ENCODE measurements at regions of chr18 and their contacts with region 1.

Region 1: DNA sequence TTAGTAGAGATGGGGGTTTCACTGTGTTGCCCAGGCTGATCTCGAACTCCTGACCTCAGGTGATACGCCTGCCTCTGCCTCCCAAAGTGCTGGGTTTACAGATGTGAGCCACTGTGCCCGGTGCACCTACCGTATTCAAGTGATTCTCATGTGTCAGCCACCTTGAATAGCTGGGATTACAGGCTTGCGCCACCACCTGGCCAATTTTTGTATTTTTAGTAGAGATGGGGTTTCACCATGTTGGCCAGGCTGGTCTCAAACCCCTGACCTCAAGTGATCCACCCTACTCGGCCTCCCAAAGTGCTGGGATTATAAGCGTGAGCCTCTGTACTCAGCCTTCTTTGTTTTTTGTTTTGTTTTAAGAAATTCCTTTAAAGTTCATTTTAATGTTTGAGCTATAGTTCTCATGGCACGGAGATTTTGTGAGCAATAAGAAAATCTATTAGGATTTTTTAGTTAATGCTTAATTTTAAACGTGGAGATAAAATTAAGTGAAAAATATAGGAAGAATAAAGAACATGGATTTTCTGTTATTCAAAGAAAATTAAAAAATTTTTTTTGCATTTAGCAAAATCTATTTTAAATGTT is 242.6 kb downstream of the PHLPP1 start:
- H3K4me3 ChIP-seq: no peak overlapping the region
- H3K27ac ChIP-seq: no peak overlapping the region
- H3K4me1 ChIP-seq: no peaks in the 10 kb centered on the region
- CTCF ChIP-seq: peak; percentile 49; the same call in 1 of the 2 replicates

Region 2: GRCh38 chr18:62714671-62715435 is 243.1 kb before region 1 on chr18:
- CTCF ChIA-PET with region 1: interaction called, 26 read pairs
- POLR2A ChIA-PET with region 1: interaction called, 4 read pairs
- H3K4me3 ChIP-seq: peak overlapping the region; percentile 83
- H3K27ac ChIP-seq: peak overlapping the region; percentile 99
- H3K4me1 ChIP-seq: peaks cover 20% of the 10 kb centered on the region
- CTCF ChIP-seq: peak; percentile 97

Region 3: DNA sequence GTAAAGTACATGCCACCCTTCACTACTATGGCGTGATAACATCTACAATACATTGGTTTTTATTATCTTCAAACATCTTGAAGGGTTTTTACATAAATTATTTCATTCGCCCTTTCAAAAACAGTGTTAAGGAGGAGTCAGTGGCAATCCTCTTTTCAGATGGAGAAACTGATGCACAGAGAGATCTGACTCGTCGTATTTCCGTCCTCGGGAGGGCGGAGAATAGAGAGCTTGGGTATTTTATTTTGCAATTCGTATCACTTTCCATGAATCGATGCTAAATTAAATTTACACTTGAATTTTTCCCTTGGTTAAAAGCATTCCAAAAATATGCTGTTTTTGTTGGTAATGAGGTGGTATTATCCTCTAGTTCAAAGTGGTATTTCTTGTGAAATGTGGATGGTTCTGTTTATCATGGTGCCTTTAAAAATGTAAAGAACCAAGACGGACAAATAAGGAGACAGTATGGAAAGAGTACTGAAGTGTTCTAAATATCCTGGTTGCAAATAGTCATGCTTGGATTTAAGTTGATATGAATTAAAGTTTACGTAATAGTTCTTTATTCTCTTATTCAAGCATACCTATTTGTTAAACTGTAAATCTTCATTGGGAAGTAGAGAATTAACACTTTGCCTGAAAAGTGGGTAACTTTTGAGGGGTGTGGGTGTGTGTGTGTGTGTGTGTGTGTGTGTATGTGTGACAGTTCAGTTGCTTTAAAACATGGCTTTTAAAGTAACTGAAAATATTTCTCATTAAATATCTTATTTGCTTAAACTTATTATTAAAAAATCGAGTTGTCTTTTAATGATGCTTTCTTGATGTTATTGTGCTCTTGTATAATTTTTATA is 237.0 kb before region 1 on chr18:
- CTCF ChIA-PET with region 1: interaction called, 26 read pairs
- POLR2A ChIA-PET with region 1: no interaction called
- H3K4me3 ChIP-seq: no peak overlapping the region
- H3K27ac ChIP-seq: no peak overlapping the region
- H3K4me1 ChIP-seq: peaks cover 52% of the 10 kb centered on the region
- CTCF ChIP-seq: no peak

Region 4: GRCh38 chr18:62944454-62944853 is 13.5 kb before region 1 on chr18:
- CTCF ChIA-PET with region 1: interaction called, 16 read pairs
- POLR2A ChIA-PET with region 1: no interaction called
- H3K4me3 ChIP-seq: no peak overlapping the region
- H3K27ac ChIP-seq: no peak overlapping the region
- H3K4me1 ChIP-seq: no peaks in the 10 kb centered on the region
- CTCF ChIP-seq: no peak

Region 5: GRCh38 chr18:63969960-63970802 is 1012.2 kb after region 1 on chr18 and contains the start of gene SERPINB8:
- CTCF ChIA-PET with region 1: no interaction called
- POLR2A ChIA-PET with region 1: no interaction called
- H3K4me3 ChIP-seq: peak within 1 kb of the TSS; percentile 76
- H3K27ac ChIP-seq: peak within 1 kb of the TSS; percentile 94
- H3K4me1 ChIP-seq: peaks cover 9% of the 10 kb centered on the region; the same call in 1 of the 2 replicates
- CTCF ChIP-seq: no peak

Measured in HEK293 (cell line).